ENCODE measurements at regions of chr3 and their contacts with region 1.

Region 1: DNA sequence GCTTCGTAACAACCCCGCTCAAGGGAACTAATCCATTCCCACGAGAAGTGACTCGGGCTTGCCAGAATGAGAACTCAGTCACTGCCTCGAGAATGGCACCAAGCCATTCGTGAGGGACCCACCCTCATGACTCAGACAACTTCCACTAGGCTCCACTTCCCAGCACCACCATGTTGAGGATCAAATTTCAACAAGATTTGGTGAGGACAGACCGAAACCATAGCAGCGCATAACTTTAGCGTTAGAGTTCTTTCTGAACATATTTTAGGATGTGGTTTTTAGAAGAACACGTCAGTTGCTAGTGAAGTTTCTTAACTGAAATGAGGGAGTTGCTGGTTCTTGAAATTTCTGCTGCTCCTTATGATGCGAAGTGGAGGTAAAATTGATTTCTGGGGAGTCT is 13.5 kb downstream of the PTPRG start:
- DNase-seq: peak in 1 of 2 donors; percentile 74
- H3K4me3 ChIP-seq: no peak overlapping the region
- H3K27ac ChIP-seq: peak overlapping the region in 1 of 2 donors; percentile 58
- H3K4me1 ChIP-seq: peaks cover 4 to 33% of the 10 kb centered on the region in 2 donors
- H3K27me3 ChIP-seq: no peaks in the 10 kb centered on the region
- CTCF ChIP-seq: no peak

Region 2: GRCh38 chr3:61637088-61638051 is 62.5 kb after region 1 on chr3:
- intact Hi-C with region 1: loop called (anchors 5 kb)
- DNase-seq: no peak
- H3K4me3 ChIP-seq: peak overlapping the region; percentile 48 to 60
- H3K27ac ChIP-seq: peak overlapping the region; percentile 78
- H3K4me1 ChIP-seq: peaks cover 0 to 6% of the 10 kb centered on the region in 2 donors
- H3K27me3 ChIP-seq: no peaks in the 10 kb centered on the region
- CTCF ChIP-seq: no peak

Region 3: DNA sequence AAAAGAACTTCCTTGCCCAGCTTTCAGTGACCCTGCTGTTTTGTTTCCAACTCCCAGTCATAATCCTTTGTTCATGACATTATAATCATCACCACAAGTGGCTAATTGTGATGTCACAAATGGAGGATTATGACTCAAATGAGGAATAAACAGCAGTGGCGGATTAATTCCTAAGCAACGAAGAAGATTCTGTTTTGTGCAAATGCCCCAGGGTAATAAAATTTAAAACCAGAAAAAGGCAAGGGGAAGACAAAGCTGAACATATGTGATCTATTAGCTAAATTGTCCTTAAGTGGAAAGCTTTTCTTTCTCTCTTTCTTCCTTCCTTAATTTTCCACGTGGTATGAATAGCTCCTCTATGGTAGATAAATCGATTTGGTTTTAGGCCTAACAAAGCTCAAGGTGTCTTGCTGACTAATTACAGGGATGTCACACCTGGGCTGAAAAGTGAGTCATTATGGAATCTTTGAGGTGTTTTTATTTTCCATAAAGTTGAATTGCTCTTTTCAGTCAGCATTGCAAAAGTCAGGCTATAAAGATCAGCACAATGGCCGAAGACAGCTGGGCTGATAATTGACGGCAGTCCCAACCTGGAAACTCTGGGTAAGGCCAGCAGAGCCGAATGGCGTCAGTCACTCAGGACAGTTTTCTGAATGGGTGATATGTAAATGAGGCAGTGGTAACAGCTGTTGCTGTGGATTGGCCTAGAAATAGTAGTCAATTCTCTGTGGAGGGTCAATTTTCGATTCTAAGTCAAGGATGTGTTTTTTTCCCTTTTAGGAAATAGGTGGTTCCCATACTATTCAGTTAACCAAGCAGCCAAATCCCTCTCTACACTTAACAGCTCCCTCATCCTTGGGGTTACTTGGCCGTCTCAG is 108.1 kb after region 1 on chr3:
- intact Hi-C with region 1: no loop called
- DNase-seq: no peak
- H3K4me3 ChIP-seq: no peak overlapping the region
- H3K27ac ChIP-seq: peak overlapping the region; percentile 75 to 84
- H3K4me1 ChIP-seq: peaks cover 7 to 37% of the 10 kb centered on the region in 2 donors
- H3K27me3 ChIP-seq: no peaks in the 10 kb centered on the region
- CTCF ChIP-seq: no peak

Region 4: GRCh38 chr3:62159709-62160092 is 584.8 kb after region 1 on chr3:
- intact Hi-C with region 1: loop called (anchors 2 kb)
- DNase-seq: peak in 1 of 2 donors; percentile 93
- H3K4me3 ChIP-seq: no peak overlapping the region
- H3K27ac ChIP-seq: peak overlapping the region; percentile 86 to 90
- H3K4me1 ChIP-seq: peaks cover 14 to 68% of the 10 kb centered on the region in 2 donors
- H3K27me3 ChIP-seq: no peaks in the 10 kb centered on the region
- CTCF ChIP-seq: no peak

Measured in ascending aorta (tissue), 2 donors.